ENCODE measurements at regions of chr1 and their contacts with region 1.

Region 1: DNA sequence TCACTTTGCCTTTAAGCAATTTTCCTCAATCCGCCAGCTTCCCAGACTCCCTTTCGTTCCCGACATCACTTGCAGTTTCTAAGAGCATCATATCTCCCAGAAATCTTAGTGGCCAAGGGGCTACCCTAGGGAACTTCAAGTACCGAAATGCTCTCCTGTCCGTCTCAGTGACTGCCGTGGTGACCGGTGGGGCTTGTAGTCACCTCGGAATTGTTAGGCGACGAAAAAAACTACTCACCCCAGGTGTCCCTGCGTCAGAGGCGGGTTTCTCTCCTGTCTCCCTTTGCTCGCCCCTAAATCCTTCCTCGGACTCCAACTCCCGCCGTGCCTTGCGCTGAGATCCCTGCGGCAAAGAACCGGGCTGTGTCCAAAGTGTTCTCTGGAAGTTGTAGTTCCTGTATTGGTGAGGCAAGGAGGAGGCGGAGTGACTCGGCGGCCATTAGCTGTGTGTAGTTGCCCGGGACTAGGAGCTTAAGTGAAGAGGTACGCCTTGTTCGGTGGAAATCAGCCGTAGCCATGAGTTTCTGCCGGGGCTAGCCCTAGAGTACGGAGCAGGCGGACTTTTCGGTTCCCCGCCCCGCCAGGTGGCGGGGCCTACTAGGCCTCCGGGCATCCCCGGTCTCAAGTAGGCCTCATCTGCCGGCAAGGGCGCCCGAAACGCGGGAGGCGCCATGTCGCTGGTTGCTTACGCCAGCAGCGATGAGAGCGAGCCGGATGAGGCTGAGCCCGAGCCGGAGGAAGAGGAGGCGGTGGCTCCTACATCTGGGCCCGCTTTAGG is at the start of gene PRCC:
- DNase-seq: peak; percentile 99
- H3K4me3 Mint-ChIP-seq: no peak within 1 kb of the TSS
- H3K27ac Mint-ChIP-seq: no peak within 1 kb of the TSS
- H3K4me1 Mint-ChIP-seq: peaks cover 40% of the 10 kb centered on the region
- H3K27me3 Mint-ChIP-seq: no peaks in the 10 kb centered on the region
- total RNA-seq, gene PRCC: 61.6 to 74.1 TPM

Region 2: DNA sequence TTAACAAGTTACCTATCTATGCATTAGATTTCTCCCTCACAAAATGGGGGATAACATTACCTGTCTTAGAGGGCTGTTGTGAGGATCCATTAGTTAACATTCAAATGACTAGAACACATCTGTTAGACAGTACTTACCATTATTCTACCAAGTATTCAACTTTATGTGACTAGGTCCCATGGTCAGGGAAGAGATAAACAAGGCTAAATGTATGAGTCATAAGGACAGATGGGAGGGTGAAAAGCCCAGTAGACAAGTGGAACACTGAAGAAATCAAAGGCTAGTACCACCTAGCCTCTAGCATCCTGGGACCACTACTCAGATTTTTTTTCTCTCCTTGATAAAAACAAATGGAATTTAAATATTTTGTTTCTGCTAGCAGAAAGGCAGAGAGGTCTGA is 459.2 kb before region 1 on chr1:
- CTCF ChIA-PET with region 1: no interaction called
- POLR2A ChIA-PET with region 1: no interaction called
- DNase-seq: no peak
- H3K4me3 Mint-ChIP-seq: no peak overlapping the region
- H3K27ac Mint-ChIP-seq: no peak overlapping the region
- H3K4me1 Mint-ChIP-seq: no peaks in the 10 kb centered on the region
- H3K27me3 Mint-ChIP-seq: no peaks in the 10 kb centered on the region

Region 3: GRCh38 chr1:156641761-156642264 is 125.5 kb before region 1 on chr1 and contains the start of gene BCAN:
- CTCF ChIA-PET with region 1: no interaction called
- POLR2A ChIA-PET with region 1: no interaction called
- DNase-seq: no peak
- H3K4me3 Mint-ChIP-seq: no peak within 1 kb of the TSS
- H3K27ac Mint-ChIP-seq: peak within 1 kb of the TSS; percentile 49
- H3K4me1 Mint-ChIP-seq: peaks cover 42% of the 10 kb centered on the region
- H3K27me3 Mint-ChIP-seq: peaks cover 82% of the 10 kb centered on the region
- total RNA-seq, gene BCAN: not detected

Region 4: DNA sequence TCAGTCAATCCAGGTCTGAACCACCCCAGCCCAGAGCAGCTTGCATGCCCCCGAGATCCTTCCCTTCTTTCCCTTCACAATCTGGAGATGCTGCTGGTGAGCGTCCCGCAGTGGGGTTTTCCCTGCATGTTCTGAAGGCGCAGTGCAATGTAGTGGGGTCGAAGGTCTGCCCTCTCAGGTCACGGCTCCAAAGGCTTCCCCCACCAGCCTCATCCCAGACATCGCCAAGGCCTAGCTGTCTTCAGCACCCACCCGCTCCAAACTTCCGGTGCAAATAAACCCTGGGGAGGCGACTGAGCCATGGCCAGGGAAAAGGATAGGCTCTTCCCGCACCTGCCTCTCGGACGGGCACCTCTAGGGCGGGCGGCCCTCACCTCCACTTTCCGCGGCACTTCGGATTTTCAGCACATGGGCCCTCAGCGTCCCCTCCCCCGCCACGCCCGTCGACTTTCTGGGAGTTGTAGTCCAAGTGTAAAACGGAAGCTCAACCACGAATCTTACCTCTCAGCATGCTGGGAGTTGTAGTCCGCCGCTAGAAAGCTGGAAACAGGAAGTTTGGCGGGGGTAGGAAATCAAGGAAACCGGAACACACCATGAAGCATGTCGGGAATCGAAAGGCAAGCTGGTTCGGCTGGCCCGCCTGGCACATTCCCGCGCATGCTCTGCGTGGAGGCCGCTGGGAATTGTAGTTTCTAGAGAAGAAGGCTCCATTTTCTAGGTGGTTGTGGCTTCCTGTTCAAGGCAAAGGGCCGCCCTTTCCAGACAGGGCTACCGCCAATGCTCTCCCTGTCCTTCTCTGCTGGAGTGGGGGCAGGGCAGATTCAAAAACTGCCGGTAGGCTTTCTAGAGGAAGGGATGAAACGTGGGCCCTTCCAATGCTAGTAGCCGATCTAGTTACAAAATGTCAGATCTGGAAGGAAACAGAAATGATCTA is 26.3 kb before region 1 on chr1 and contains the start of gene MRPL24:
- CTCF ChIA-PET with region 1: interaction called, 4 read pairs
- POLR2A ChIA-PET with region 1: interaction called, 56 read pairs
- DNase-seq: peak; percentile 98
- H3K4me3 Mint-ChIP-seq: peak within 1 kb of the TSS; percentile 99
- H3K27ac Mint-ChIP-seq: peak within 1 kb of the TSS; percentile 97
- H3K4me1 Mint-ChIP-seq: peaks cover 66% of the 10 kb centered on the region
- H3K27me3 Mint-ChIP-seq: no peaks in the 10 kb centered on the region
- total RNA-seq, gene MRPL24: 40.3 to 43.8 TPM

Region 5: DNA sequence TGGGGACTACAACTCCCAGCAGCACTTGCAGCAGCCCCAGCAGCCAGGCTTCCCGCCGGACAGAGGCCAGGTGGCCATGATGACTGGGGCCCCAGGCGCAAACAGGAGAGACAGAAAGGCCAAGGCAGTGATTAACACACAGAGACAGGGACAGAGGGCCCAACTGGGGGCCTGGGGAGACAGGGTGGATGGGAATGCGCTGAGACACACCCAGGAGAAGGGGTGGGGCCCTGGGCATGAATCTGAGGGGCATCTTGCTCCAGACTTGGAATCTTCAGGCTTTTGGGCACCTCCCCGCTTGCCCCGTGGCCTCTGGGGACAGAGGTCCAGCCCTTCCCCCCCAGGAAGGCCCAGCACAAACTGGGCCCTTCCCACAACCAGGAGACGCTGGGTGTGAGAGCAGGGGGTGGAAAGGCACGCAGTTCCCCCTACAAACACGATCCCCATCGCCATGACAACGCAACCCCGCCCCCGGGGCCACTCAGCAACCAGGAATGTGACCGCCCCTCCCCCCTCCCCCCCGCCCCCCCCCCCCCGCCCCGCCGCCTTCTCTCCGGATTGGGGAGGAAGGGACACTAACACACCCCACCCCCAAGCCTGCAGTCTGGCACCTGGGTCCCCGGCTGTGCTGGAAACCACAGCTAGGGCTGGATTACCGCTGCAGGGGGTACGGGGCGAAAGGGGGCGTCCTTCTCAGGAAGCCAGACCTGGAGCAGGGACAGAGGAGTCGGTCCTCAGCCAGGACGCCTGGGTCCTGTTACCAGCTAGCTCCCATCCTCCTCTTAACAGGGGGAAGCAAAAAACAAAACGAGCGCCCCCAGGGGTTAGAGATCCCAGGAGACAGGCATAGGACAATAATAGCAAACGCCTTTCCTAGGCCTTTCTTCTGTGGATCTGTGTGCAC is 20.3 kb before region 1 on chr1:
- CTCF ChIA-PET with region 1: interaction called, 11 read pairs
- POLR2A ChIA-PET with region 1: interaction called, 75 read pairs
- DNase-seq: peak; percentile 59
- H3K4me3 Mint-ChIP-seq: peak overlapping the region; percentile 94
- H3K27ac Mint-ChIP-seq: peak overlapping the region; percentile 95
- H3K4me1 Mint-ChIP-seq: peaks cover 69% of the 10 kb centered on the region
- H3K27me3 Mint-ChIP-seq: no peaks in the 10 kb centered on the region

Region 6: DNA sequence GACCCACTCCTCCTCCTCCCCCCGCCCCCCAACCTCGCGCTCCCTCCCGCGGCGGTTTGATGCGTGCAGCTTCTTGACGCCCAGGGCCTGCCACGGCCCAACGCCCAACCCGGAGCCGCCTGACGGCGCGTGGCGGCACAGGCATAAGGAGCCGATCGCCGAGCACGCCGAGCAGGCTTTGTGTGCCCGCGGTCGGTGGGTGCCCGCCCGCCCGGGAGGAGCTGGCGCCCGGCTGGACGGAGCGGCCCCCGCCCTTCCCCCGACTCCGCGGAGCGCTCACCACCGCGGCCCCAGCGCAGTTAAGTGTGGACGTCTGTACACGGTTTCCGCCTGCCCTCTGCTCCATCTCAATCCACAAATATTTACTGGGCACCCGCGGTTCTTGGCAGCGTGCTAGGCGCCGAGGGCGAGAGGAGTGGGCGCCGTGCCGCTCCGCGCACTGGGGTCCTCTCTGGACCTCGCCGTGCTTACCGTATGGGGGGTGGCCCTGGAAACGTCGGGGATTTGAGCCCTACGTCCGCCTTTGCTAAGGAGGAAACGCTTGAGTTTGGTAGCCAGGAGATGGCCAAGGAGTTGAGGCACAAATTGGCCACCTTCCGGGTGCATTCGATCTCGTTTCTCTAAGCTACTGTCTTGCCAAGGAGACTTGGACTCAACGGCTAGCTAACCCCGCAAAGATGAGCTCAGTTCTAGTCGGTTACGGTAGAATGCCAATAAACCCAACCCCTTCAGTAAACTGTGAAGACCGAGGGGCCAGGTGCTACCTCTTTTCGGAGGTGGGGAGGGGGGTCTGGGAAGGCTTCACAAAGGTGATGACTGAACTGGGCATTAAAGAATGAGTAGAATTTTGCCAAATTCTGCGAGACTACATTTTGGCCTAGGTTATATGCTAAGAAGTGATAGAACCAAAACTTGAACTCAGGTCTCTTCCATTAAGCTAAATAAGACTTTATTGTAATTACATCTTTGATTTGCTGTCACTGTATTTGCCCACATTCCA is 15.2 kb before region 1 on chr1:
- CTCF ChIA-PET with region 1: interaction called, 11 read pairs
- POLR2A ChIA-PET with region 1: interaction called, 75 read pairs
- DNase-seq: peak; percentile 98
- H3K4me3 Mint-ChIP-seq: peak overlapping the region; percentile 96
- H3K27ac Mint-ChIP-seq: peak overlapping the region; percentile 89
- H3K4me1 Mint-ChIP-seq: peaks cover 40% of the 10 kb centered on the region
- H3K27me3 Mint-ChIP-seq: no peaks in the 10 kb centered on the region

Region 7: DNA sequence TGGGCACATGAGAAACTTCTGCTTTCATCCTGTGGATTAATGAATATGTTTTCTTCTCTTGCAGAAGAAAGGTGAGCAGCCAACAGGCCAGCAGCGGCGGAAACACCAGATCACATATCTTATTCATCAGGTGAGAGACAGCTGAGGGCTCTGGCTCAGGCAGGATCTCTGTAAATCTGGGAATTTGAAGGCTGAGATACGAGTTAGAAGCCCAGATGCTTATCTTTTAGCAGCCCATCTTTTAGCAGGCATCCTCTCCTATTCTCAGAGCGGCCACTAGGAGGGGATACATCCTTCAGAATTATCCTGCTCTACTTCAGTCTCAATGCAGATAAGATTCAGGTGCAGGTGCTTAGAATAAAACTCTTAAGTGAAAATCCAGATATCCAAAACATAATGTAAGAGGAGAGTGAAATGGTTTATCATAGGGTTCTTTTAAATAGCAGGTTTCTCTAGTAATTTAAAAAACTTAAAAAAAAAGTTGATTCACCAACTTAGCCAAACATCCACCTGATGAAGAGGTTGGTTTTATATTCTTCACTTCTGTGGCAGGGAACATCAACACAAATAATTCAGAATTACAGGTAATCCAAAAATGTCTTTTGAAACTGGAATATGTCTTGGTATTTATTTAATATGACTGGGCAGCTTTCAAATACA is 30.1 kb after region 1 on chr1:
- CTCF ChIA-PET with region 1: interaction called, 3 read pairs
- POLR2A ChIA-PET with region 1: interaction called, 18 read pairs
- DNase-seq: peak; percentile 70
- H3K4me3 Mint-ChIP-seq: no peak overlapping the region
- H3K27ac Mint-ChIP-seq: no peak overlapping the region
- H3K4me1 Mint-ChIP-seq: peaks cover 24% of the 10 kb centered on the region
- H3K27me3 Mint-ChIP-seq: no peaks in the 10 kb centered on the region

Measured in activated CD4-positive, alpha-beta memory T cell treated with anti-CD3 and anti-CD28 coated beads, Interleukin-2, amount 10 ng/mL, durations not matched to agents 7 days and 5 days (primary cell).